Common myeloid progenitor, CD34-positive (primary cell): ENCODE measurements at regions of chr9 and their contacts with region 1.

Region 1: GRCh38 chr9:114082017-114082762 is 4.1 kb upstream of the AMBP start:
- DNase-seq: peak; percentile 79 to 89 (median 81)
- H3K4me3 ChIP-seq: no peak overlapping the region
- H3K27ac ChIP-seq: no peak overlapping the region
- H3K4me1 ChIP-seq: peaks cover 0 to 3% (median under 1%) of the 10 kb centered on the region in 4 experiments
- H3K27me3 ChIP-seq: no peaks in the 10 kb centered on the region

Region 2: DNA sequence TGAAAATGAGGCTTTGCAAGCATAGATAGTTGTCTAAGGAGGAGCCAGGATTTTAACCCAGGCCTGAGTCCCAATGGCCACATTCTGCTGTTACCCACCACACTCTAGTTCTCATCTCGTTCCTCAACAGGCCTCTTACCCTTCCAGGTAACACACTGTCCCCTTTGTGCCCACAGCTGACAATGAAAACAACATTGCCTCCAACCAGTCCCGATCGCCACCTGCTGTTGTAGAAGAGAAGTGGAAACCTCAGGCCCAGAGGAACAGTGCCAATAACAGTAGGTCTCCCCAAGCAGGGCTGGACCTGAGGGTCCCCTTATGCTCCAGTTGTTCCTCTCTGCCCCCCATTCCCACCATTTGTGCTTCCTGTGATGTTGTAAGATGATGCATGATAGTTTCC is 34.5 kb before region 1 on chr9:
- CTCF ChIA-PET with region 1: no interaction called
- POLR2A ChIA-PET with region 1: no interaction called
- DNase-seq: peak; percentile 2 to 22 (median 20)
- H3K4me3 ChIP-seq: no peak overlapping the region
- H3K27ac ChIP-seq: no peak overlapping the region
- H3K4me1 ChIP-seq: no peaks in the 10 kb centered on the region
- H3K27me3 ChIP-seq: no peaks in the 10 kb centered on the region

Region 3: GRCh38 chr9:114059047-114059803 is 23.0 kb before region 1 on chr9:
- CTCF ChIA-PET with region 1: interaction called, 10 read pairs
- POLR2A ChIA-PET with region 1: no interaction called
- DNase-seq: no peak
- H3K4me3 ChIP-seq: no peak overlapping the region
- H3K27ac ChIP-seq: no peak overlapping the region
- H3K4me1 ChIP-seq: no peaks in the 10 kb centered on the region
- H3K27me3 ChIP-seq: peaks cover 0 to 2% (median 0%) of the 10 kb centered on the region in 5 experiments

Region 4: DNA sequence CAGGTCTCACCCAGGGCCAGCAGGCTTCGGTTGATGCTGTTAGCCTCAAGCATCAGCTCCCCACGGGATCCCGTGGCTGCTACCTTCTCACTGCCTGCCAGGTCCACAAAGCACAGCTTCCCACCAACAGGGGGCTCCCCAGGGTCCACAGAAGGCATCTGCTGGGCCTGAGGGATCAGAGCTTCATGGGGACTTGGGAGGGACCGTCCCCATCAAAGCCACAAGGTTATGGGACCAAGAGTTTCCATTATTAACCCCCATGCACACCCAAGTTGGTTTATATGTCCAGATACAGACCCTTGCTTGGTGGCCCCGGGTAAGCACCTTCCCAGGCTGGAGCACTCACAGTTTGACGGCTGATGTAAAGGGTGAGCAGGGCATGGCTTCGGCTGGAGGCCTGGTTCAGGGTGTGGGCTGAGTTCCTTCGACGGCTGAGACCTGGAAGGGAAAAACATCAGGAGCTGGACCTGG is 13.9 kb after region 1 on chr9:
- CTCF ChIA-PET with region 1: interaction called, 20 read pairs
- POLR2A ChIA-PET with region 1: no interaction called
- DNase-seq: peak in 1 of 3 donors; percentile 7
- H3K4me3 ChIP-seq: no peak overlapping the region
- H3K27ac ChIP-seq: no peak overlapping the region
- H3K4me1 ChIP-seq: peaks cover 5 to 23% (median 12%) of the 10 kb centered on the region in 4 experiments
- H3K27me3 ChIP-seq: peaks cover 0 to 32% (median 19%) of the 10 kb centered on the region in 5 experiments

Region 5: DNA sequence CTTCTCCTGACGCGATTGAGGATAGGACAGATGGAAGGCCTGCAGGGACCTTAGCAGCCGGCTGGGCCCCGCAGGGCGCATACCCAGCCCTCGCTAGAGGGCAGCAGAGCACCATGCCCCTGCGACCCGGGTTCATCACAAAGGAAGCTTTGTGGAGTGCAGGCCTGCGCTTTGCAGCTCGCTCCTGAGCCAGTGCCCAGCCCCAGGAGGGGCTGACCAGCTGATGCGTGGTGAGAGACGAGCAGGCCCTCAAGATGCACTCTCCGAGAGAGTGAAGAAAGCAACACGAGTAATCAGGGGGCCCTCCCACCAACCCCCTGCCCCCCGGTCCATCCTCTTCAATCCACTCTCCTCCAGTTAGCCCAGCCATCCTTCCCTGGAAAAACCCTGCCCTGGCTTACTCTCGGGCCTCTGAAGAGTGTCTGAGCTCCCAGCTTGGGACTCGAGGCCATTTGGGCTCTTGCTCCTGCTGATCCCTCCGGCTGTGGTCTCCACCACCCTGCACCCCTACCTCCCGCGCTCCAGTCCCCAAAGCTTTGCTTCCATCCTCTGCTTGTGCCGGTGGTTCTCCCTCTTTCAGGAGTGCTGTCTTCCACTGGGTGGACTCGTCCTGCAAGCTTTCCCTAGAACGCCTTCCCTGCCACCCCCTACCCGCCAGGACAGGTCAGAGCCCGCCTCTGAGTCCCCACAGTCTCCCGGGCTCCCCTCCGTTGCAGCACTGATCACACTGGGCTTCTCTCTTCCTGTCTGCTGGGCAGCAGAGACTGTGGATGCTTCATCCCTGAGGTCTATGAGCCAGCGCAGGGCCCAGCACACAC is 26.0 kb after region 1 on chr9:
- CTCF ChIA-PET with region 1: interaction called, 22 read pairs
- POLR2A ChIA-PET with region 1: no interaction called
- DNase-seq: peak; percentile 56 to 78 (median 73)
- H3K4me3 ChIP-seq: no peak overlapping the region
- H3K27ac ChIP-seq: no peak overlapping the region
- H3K4me1 ChIP-seq: no peaks in the 10 kb centered on the region
- H3K27me3 ChIP-seq: peaks cover 0 to 9% (median 2%) of the 10 kb centered on the region in 5 experiments

Region 6: GRCh38 chr9:114259798-114260523 is 177.8 kb after region 1 on chr9:
- CTCF ChIA-PET with region 1: interaction called, 10 read pairs
- POLR2A ChIA-PET with region 1: no interaction called
- DNase-seq: no peak
- H3K4me3 ChIP-seq: no peak overlapping the region
- H3K27ac ChIP-seq: no peak overlapping the region
- H3K4me1 ChIP-seq: no peaks in the 10 kb centered on the region
- H3K27me3 ChIP-seq: peaks cover 0 to 2% (median 0%) of the 10 kb centered on the region in 5 experiments

Region 7: GRCh38 chr9:114291064-114291474 is 208.9 kb after region 1 on chr9:
- CTCF ChIA-PET with region 1: interaction called, 32 read pairs
- POLR2A ChIA-PET with region 1: no interaction called
- DNase-seq: peak; percentile 55 to 72 (median 58)
- H3K4me3 ChIP-seq: no peak overlapping the region
- H3K27ac ChIP-seq: no peak overlapping the region
- H3K4me1 ChIP-seq: peaks cover 0 to 1% (median 0%) of the 10 kb centered on the region in 4 experiments
- H3K27me3 ChIP-seq: no peaks in the 10 kb centered on the region